CD8-positive, alpha-beta T cell (primary cell): ENCODE measurements at regions of chr12 and their contacts with region 1.

Region 1: GRCh38 chr12:62332598-62332997 is 72.4 kb downstream of the USP15 start:
- DNase-seq: no peak
- ATAC-seq: no peak
- H3K4me3 ChIP-seq: no peak overlapping the region
- H3K4me3 Mint-ChIP-seq: no peak overlapping the region
- H3K27ac ChIP-seq: no peak overlapping the region
- H3K27ac Mint-ChIP-seq: no peak overlapping the region
- H3K4me1 ChIP-seq: no peaks in the 10 kb centered on the region
- H3K4me1 Mint-ChIP-seq: peaks cover 43% of the 10 kb centered on the region
- H3K27me3 ChIP-seq: no peaks in the 10 kb centered on the region
- H3K27me3 Mint-ChIP-seq: no peaks in the 10 kb centered on the region
- CTCF ChIP-seq: no peak

Region 2: DNA sequence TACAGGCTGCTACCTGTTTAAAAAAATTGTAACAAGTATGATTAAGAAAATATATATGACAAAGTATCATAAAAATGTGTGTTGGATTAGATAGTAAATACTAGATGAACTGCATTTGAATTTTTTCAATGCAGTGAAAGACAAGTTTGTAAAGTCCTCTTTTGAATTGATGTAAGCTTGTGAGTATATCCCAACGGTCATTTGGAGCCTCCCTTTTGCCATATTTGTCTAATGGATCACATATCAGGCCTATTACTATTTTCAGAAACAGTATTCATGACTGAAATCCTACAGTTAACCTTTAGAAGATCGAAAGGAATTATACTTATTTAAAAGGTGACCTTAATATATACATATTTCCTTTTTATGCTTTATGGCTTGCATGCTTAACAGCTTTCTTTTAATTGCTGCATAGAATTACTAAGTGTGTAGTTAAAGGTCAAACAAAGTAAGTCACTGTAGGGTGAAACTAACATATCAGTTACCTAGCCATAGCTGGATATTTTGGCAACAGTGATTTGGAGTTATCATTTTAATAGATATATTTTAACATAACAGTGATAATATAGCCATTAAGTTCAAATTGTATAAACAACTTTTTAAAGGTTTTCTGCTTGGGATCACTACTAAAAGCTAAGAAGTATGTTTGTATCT is 18.7 kb before region 1 on chr12:
- CTCF ChIA-PET with region 1: interaction called, 4 read pairs
- POLR2A ChIA-PET with region 1: interaction called, 3 read pairs
- intact Hi-C with region 1: loop called in 1 of 2 experiments (anchors 2 kb)
- DNase-seq: no peak
- ATAC-seq: no peak
- H3K4me3 ChIP-seq: no peak overlapping the region
- H3K4me3 Mint-ChIP-seq: no peak overlapping the region
- H3K27ac ChIP-seq: no peak overlapping the region
- H3K27ac Mint-ChIP-seq: no peak overlapping the region
- H3K4me1 ChIP-seq: peaks cover 10% of the 10 kb centered on the region
- H3K4me1 Mint-ChIP-seq: peaks cover 53% of the 10 kb centered on the region
- H3K27me3 ChIP-seq: no peaks in the 10 kb centered on the region
- H3K27me3 Mint-ChIP-seq: no peaks in the 10 kb centered on the region
- CTCF ChIP-seq: no peak

Region 3: DNA sequence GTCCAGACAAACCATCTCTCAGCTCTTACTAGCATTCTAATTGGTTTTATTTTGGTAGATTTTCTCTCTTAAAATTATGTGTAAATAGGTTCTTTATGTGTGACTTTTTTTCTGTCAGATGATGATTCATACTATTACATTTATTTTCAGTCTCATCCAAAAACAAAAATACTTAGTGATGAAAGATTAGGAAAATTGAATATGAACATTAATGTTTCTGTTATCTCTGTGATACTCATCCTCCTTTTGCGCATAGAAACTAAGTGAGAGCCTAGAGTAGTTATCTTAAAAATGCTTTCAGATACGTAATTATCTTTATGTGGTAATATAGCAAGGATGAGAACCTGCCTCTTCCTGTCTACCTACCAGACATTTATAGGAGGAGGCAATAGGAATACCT is 49.9 kb after region 1 on chr12:
- CTCF ChIA-PET with region 1: no interaction called
- POLR2A ChIA-PET with region 1: no interaction called
- intact Hi-C with region 1: loop called in 1 of 2 experiments (anchors 5 kb)
- DNase-seq: no peak
- ATAC-seq: no peak
- H3K4me3 ChIP-seq: no peak overlapping the region
- H3K4me3 Mint-ChIP-seq: no peak overlapping the region
- H3K27ac ChIP-seq: no peak overlapping the region
- H3K27ac Mint-ChIP-seq: no peak overlapping the region
- H3K4me1 ChIP-seq: no peaks in the 10 kb centered on the region
- H3K4me1 Mint-ChIP-seq: peaks cover 13% of the 10 kb centered on the region
- H3K27me3 ChIP-seq: no peaks in the 10 kb centered on the region
- H3K27me3 Mint-ChIP-seq: no peaks in the 10 kb centered on the region
- CTCF ChIP-seq: no peak